A549 (cell line): ENCODE measurements at regions of chr14 and their contacts with region 1.

Region 1: DNA sequence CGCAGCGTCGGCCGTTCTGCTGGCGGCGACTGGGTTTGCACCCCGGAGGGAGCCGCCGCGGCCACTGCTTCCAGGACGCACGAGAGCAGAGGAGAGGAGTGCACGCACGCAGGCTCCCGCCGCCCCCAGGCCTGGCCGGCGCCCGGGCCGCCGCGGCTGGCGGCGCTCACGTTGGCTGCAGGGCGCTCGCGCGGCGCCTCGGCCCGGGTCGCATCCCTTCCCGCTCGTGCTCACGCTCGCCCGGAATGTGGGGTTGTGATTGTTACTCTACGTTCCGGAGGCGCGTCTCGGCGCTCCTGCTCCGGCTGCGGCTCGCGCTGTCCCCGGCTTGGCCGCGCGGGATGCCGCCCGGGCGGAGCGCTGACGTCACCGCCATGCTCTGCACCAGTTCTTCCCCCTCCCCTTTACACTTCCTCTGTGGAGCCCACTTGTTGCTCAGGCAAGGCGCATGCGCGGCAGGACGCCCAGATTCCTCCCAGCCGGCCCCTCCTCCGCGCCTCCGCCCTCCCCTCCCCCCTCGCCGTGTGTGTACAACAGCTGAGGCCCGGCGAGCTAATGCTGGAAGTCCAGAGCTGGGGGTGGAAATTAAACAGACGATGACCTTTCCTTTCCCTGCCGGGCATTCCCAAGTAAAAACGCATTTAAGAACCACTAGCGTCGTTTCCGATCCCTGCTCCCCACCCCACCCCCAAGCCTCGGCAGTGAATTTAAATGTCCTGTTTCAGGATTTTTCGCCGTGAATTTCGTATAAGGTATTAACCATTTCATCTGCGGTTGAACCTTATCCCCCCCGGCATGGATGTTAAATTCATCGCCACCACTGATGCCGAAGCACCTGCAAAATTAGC is at the start of gene IRF2BPL:
- DNase-seq: peak; percentile 94 to 99
- ATAC-seq: peak; percentile 46 to 48
- H3K4me3 ChIP-seq: peak within 1 kb of the TSS; percentile 78
- H3K27ac ChIP-seq: peak within 1 kb of the TSS; percentile 95 to 99
- H3K4me1 ChIP-seq: peaks cover 49% of the 10 kb centered on the region
- CTCF ChIP-seq: no peak
- EP300 ChIP-seq: peak; percentile 83 to 94
- POLR2A ChIP-seq: peak; percentile 86
- RAD21 ChIP-seq: peak; percentile 31 to 61; a peak in 4 of 5 replicates
- polyA plus RNA-seq, gene IRF2BPL: 12.5 and 18.1 TPM in 2 replicates

Region 2: DNA sequence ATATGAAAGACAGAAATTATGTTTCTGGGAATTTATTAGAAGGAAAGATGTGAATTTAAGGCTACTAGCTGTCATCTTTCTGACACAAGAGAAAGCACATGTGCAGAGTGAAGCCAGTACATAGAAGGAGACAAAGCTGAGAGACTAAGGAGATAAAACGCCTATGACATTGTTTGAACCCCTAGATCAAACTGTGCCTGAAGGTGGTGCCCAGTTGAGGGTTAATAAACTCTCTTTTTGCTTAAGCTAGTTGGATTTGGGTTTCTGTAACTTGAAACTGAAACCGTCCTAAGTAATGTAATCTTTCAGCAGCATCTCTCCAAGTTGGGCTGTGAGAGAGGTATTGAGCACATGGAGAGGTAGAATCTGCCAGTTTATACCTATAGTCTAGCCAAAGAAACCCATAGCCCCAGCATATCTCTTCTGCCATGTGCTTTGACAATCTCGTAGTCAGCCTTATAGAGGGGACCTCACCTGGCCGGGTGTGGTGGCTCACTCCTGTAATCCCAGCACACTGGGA is 118.2 kb before region 1 on chr14:
- CTCF ChIA-PET with region 1: interaction called, 144 read pairs
- POLR2A ChIA-PET with region 1: interaction called, 9 read pairs
- DNase-seq: no peak
- ATAC-seq: no peak
- H3K4me3 ChIP-seq: no peak overlapping the region
- H3K27ac ChIP-seq: peak overlapping the region; percentile 39 to 58; a peak in 4 of 6 replicates
- H3K4me1 ChIP-seq: peaks cover 58% of the 10 kb centered on the region
- CTCF ChIP-seq: no peak
- EP300 ChIP-seq: no peak
- POLR2A ChIP-seq: no peak
- RAD21 ChIP-seq: no peak

Region 3: GRCh38 chr14:76947078-76947837 is 81.3 kb before region 1 on chr14:
- CTCF ChIA-PET with region 1: interaction called, 12 read pairs
- POLR2A ChIA-PET with region 1: interaction called, 28 read pairs
- DNase-seq: peak; percentile 90 to 95
- ATAC-seq: peak; percentile 88 to 89
- H3K4me3 ChIP-seq: no peak overlapping the region
- H3K27ac ChIP-seq: peak overlapping the region; percentile 96 to 100
- H3K4me1 ChIP-seq: peaks cover 71% of the 10 kb centered on the region
- CTCF ChIP-seq: peak; percentile 56; the same call in 2 of the 3 replicates
- EP300 ChIP-seq: peak in 1 of 2 experiments; percentile 59; a peak in 1 of 5 replicates
- POLR2A ChIP-seq: no peak
- RAD21 ChIP-seq: peak; percentile 61 to 82

Region 4: DNA sequence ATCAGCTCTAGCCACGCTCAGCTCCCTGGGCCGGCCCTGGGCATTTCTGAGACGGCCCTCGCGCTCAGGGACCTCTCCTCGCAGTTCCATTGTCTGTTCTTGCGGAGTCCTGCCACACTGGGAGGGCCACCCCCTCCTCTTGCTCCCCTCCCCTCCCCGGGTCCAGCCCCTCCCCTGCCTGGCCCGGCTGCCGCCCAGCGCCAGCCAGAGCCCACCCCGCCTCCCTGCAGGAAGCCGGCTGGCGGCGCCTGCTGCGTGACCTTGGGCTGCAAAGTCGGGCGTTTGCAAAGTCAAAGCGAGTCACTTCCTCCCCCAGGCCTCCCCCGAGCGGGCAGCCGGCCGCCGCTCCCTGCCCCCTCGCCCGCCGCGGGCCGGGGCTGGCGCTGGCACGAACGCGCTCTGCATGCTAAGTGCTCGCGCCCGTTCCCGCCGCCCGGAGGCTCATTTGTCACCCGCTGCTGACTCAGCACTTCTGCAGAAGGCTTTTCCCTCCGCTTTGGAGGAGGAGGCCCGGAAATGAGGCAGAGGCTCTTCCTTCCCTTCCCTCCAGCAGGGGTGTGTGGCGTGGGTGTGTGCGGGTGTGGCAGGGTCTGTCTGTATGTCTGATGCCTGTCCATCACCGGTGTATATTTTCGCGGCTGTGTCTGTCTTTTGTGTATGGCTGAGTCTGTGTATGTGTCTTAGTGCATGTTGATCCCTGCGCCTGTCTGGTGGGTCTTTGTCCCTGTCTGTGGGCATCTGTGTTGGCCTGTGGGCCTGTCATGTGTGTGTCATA is 72.1 kb before region 1 on chr14:
- CTCF ChIA-PET with region 1: interaction called, 16 read pairs
- POLR2A ChIA-PET with region 1: interaction called, 32 read pairs
- DNase-seq: peak; percentile 66 to 97
- ATAC-seq: peak; percentile 65 to 66
- H3K4me3 ChIP-seq: peak overlapping the region; percentile 30
- H3K27ac ChIP-seq: peak overlapping the region; percentile 96 to 100
- H3K4me1 ChIP-seq: peaks cover 91% of the 10 kb centered on the region
- CTCF ChIP-seq: no peak
- EP300 ChIP-seq: peak; percentile 85 to 95; a peak in 4 of 5 replicates
- POLR2A ChIP-seq: peak; percentile 29
- RAD21 ChIP-seq: peak; percentile 34 to 73; a peak in 4 of 5 replicates

Region 5: GRCh38 chr14:76962303-76962660 is 66.3 kb before region 1 on chr14:
- CTCF ChIA-PET with region 1: interaction called, 16 read pairs
- POLR2A ChIA-PET with region 1: interaction called, 32 read pairs
- DNase-seq: no peak
- ATAC-seq: peak; percentile 21 to 25; a peak in 5 of 6 replicates
- H3K4me3 ChIP-seq: peak overlapping the region; percentile 30
- H3K27ac ChIP-seq: peak overlapping the region; percentile 96 to 100
- H3K4me1 ChIP-seq: peaks cover 52% of the 10 kb centered on the region
- CTCF ChIP-seq: no peak
- EP300 ChIP-seq: no peak
- POLR2A ChIP-seq: no peak
- RAD21 ChIP-seq: no peak

Region 6: GRCh38 chr14:77040059-77040740 is 11.6 kb after region 1 on chr14:
- CTCF ChIA-PET with region 1: interaction called, 16 read pairs
- POLR2A ChIA-PET with region 1: interaction called, 54 read pairs
- DNase-seq: peak; percentile 88 to 99
- ATAC-seq: peak; percentile 86 to 88
- H3K4me3 ChIP-seq: peak overlapping the region; percentile 36
- H3K27ac ChIP-seq: peak overlapping the region; percentile 90 to 99
- H3K4me1 ChIP-seq: peaks cover 86% of the 10 kb centered on the region
- CTCF ChIP-seq: no peak
- EP300 ChIP-seq: peak; percentile 18 to 68; a peak in 2 of 5 replicates
- POLR2A ChIP-seq: no peak
- RAD21 ChIP-seq: peak; percentile 8 to 31; a peak in 2 of 5 replicates

Region 7: DNA sequence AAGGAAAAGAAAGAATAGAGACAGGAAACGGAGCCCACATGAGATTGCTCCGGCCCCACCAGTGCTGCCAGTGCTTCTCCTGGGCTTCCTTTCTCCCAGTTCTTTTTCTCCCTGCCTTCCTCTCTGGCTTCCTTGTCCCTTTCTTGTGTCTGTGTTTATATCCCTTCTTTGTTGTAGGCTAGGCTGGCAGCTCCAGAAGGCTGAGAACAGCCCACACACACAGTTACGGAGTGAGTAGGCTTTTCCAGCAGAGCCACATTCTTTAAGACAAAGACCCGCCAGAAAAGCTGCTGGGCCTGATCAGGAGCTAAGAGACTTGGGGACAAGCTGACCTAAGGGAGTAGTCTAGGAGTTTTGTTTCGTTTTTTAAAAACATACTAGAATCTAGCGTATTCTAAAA is 82.4 kb after region 1 on chr14:
- CTCF ChIA-PET with region 1: no interaction called
- POLR2A ChIA-PET with region 1: no interaction called
- DNase-seq: no peak
- ATAC-seq: no peak
- H3K4me3 ChIP-seq: no peak overlapping the region
- H3K27ac ChIP-seq: no peak overlapping the region
- H3K4me1 ChIP-seq: no peaks in the 10 kb centered on the region
- CTCF ChIP-seq: no peak
- EP300 ChIP-seq: no peak
- POLR2A ChIP-seq: no peak
- RAD21 ChIP-seq: no peak